Activated T-helper 2 cell treated with anti-CD3 and anti-CD28 coated beads, Interferon-gamma antibody, Interleukin-2, Interleukin-4, amounts not matched to agents 10 μg/mL and 5 μg/mL and 100 μg/mL, durations not matched to agents 14 hours and 24 hours and 36 hours (primary cell): ENCODE measurements at regions of chr20 and their contacts with region 1.

Region 1: DNA sequence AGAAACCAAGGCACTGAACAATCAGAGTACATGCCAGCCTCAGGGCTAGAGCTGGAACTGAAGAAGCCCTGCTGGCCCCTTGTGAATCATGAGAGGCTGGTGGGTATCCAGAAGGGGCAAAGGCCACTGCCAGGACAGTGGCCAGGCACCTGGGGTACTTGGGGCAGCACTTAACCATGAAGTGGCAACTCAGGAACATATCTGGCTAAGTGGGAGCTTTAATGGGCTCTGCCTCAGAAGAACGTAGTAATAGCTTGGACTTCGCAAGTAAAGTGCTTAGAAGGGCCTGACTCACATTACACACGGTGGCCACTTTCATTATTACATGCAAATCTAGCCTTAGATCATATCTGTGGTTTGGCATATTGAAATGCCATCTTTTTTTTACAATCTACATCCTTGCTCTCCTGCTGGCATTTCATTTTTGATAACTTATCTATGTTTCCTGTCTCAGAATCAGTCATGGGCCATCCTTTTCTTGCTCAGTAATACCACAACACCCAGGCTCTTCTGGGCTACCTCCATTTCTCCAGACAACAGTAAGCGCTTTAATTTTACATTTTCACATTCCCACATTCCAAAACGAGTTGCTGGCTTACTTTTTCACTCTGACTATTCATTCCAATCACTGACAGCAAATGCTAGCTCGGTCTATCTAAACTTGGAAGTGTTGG is 21.6 kb downstream of the NAPB start:
- DNase-seq: peak; percentile 15
- H3K4me3 Mint-ChIP-seq: no peak overlapping the region
- H3K27ac Mint-ChIP-seq: peak overlapping the region; percentile 63
- H3K4me1 Mint-ChIP-seq: peaks cover 57% of the 10 kb centered on the region
- H3K27me3 Mint-ChIP-seq: no peaks in the 10 kb centered on the region

Region 2: DNA sequence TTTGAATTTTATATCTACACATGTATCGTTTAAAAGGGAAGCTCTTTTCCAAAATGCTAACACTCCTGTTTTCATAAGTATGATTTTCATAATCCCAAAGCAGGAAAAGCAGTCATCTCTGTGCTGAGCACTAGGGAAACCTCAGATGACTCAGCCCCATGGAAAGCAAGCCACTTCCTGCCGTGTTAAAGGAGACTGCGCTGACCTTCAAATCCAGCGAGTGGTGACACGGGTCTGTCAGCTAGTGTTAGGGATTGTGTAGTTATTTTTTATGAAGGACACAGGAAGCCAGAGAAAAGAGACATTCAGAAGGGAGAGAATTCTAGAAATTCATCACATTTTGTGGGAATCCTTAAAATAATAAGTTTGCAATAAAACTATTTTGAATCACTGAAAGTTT is 256.6 kb before region 1 on chr20:
- intact Hi-C with region 1: loop called (anchors 2 kb)
- DNase-seq: peak; percentile 17
- H3K4me3 Mint-ChIP-seq: peak overlapping the region; percentile 38
- H3K27ac Mint-ChIP-seq: peak overlapping the region; percentile 34
- H3K4me1 Mint-ChIP-seq: peaks cover 63% of the 10 kb centered on the region
- H3K27me3 Mint-ChIP-seq: peaks cover 5% of the 10 kb centered on the region

Region 3: DNA sequence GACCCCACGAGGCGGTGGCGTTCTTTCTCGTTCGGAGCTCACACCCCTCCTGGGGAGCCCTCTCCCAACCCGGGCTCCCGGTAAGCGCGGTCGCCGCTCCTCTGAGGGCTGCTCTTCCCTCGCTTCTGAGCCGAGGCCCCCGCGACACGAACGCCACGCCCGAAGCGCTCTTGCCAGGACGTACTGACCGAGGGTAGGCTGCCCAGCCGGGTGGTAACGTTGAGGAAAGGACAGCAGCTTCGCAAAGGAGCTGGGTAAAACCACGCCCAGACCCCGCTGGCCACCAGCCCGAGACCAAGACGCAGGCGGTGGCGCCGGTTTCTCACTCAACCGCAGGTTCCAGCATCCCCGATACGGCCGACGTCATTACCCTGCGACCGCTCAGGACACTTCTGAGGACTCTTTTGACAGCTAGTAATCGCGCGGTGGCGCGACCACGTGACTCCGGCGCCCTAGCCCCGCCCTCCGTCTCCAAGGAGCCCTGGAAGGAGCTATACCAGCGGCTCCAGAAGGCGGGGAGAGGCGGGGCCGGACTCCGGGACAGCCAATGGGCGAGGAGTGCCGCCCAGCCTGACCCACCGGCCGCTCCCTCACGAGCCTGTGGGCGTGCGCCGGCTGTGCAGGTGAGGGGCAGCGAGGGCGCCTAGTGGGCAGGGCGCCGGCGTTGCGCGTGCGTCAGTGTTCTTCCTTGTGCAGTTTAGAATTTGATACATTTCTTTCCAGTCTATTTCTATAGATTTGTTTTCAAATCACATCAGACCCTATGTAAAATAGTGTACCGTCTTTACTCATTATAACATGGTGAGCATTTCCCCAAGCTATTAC is 41.7 kb before region 1 on chr20:
- intact Hi-C with region 1: loop called (anchors 1 kb)
- DNase-seq: peak; percentile 100
- H3K4me3 Mint-ChIP-seq: peak overlapping the region; percentile 88
- H3K27ac Mint-ChIP-seq: peak overlapping the region; percentile 86
- H3K4me1 Mint-ChIP-seq: peaks cover 21% of the 10 kb centered on the region
- H3K27me3 Mint-ChIP-seq: no peaks in the 10 kb centered on the region

Region 4: GRCh38 chr20:23366384-23366783 is 33.3 kb before region 1 on chr20:
- intact Hi-C with region 1: loop called (anchors 1 kb)
- DNase-seq: no peak
- H3K4me3 Mint-ChIP-seq: peak overlapping the region; percentile 5
- H3K27ac Mint-ChIP-seq: peak overlapping the region; percentile 70
- H3K4me1 Mint-ChIP-seq: peaks cover 40% of the 10 kb centered on the region
- H3K27me3 Mint-ChIP-seq: no peaks in the 10 kb centered on the region

Region 5: DNA sequence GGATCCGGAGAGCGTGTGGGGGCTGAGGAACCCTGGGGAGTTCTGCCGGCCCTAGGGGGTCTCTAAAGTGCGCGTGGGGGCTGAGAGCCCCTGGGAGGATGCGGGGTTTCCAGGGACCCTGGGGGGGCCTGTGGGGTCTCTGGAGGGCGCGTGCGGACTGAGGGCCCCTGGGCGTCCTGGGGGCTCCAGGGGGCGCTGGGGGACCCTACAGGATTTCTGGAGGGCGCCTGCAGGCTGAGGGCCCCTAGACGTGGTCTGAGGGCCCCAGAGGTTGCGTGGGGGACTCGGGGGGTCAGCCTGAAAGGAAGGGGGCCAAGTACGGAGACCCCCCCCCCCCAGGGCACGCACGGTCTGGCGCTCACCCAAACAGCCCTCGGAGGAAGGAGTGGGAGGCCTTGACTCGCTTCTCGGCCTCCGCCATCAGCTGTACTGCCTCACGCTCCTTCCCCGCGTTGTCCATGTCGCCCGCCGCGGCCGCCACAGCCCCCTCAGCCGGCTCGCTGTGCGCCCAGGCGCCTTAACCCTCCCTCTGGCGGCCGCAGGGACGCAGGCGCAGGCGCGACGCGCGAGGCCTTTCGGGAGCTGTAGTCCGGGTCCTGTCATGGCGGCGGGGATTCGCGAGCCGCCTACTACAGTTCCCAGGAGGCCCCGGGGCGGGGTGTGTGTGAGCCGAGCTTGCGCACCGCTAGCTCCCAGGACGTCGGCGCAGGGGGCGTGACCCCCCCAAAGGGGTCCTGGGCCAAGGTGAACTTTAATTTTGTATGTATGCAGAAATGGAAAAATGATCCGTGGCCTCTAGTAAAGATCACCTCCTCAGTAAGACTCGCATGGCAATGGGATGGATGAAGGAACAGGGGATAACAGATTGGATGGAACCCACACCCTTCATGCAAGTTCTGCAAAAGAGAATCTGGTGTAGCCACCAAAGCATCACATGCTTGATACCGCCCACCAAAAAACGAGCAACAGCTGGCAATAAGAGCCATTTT is 21.5 kb after region 1 on chr20 and contains the start of gene NAPB:
- intact Hi-C with region 1: loop called (anchors 1 kb)
- DNase-seq: peak; percentile 90
- H3K4me3 Mint-ChIP-seq: peak within 1 kb of the TSS; percentile 93
- H3K27ac Mint-ChIP-seq: peak within 1 kb of the TSS; percentile 90
- H3K4me1 Mint-ChIP-seq: peaks cover 39% of the 10 kb centered on the region
- H3K27me3 Mint-ChIP-seq: peaks cover 6% of the 10 kb centered on the region
- total RNA-seq, gene NAPB: 13.8 and 14.0 TPM in 2 replicates